Ascending aorta (tissue), 2 donors: ENCODE measurements at regions of chr18 and their contacts with region 1.

Region 1: DNA sequence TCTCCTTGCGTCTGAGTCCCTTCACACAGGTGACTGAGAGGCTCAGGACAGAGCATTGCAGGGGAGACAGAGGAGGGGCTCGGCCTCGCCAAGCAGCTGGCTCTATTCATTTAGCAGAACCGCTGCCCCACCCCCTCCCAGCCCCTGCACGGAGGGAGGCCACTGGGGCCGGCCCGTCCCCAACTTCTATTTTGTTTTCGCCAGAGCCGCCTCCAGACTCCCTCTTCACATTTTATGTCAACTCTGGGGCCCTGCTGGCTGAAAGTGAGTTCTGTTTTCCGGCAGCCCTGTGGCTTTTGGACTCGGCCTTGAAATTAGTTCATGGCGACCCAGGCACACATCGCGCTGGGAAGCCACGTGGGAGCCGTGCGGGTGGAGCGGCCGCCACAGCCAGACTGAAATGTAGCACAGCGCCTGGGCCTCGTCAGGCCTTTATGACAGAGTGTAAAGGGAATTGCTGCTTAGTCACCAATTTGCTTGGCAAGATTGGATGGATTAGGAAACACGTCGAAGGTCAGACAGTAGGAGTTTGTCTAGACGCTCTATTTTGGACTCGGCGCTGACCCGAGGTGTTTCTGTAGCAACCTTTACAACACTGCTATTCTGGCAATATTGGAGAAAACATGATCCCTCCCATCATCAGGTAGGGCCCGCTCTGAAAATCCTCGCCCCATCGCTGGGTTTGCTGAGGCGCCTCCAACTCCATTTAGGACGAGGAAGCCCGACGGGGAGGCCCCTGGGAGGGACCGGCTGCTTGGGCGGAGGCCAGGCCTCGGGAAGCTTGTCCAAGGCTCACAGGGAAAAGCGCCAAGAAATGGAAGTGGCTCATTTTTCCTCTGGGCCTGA is 90.7 kb upstream of the CTDP1 start:
- DNase-seq: peak; percentile 82 to 97
- H3K4me3 ChIP-seq: peak overlapping the region in 1 of 2 donors; percentile 43
- H3K27ac ChIP-seq: peak overlapping the region; percentile 94 to 95
- H3K4me1 ChIP-seq: peaks cover 11 to 28% of the 10 kb centered on the region in 2 donors
- H3K27me3 ChIP-seq: no peaks in the 10 kb centered on the region
- CTCF ChIP-seq: peak in 1 of 3 experiments; percentile 20

Region 2: DNA sequence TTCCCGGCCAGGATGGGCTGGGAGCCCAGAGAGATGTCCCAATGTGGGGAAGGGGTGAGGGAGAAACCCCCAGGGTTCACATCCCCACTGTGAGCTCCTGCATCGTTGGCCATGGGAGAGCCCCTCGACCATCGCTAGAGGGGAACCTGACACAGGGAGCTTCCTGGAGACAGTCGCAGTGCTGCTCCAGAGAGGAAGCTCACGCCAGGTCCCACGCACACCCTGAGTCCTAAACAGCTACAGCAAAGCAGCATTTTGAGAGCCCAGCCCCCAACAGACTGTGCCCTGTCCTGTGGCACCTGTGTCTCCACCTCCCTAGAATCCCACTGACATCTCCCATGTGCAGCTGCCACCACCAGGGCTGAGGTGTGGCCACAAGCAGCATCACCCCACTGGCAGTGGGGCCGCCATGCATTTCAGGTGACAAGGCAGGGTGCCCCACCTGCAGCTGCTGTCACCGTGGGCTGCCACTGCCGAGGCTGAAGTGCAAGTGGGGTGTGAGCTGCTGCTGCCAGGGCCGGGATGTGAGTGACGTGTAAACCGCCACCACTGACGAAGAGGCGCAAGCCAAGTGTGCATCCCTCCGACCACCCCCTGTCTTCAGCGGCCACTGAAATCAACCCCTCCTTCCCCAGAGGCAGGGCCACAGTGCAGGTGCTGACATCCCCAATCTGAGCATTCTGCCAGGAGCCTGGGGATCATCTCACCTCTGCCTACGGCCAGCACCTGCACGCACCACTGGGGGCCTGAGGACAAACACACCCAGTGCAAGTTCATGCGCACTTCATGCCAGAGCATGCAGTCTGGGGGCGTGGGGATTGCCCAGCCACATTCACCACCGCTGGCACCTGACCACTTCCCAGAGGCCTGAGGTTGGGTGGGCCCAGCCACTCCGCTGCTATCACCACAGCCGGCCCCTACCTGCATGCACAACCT is 1076.9 kb before region 1 on chr18:
- intact Hi-C with region 1: no loop called
- DNase-seq: peak in 1 of 2 donors; percentile 54
- H3K4me3 ChIP-seq: no peak overlapping the region
- H3K27ac ChIP-seq: no peak overlapping the region
- H3K4me1 ChIP-seq: no peaks in the 10 kb centered on the region
- H3K27me3 ChIP-seq: no peaks in the 10 kb centered on the region
- CTCF ChIP-seq: no peak

Region 3: GRCh38 chr18:79068937-79069791 is 519.7 kb before region 1 on chr18 and contains the start of gene ATP9B:
- intact Hi-C with region 1: loop called (anchors 5 kb)
- DNase-seq: peak; percentile 87 to 98
- H3K4me3 ChIP-seq: peak within 1 kb of the TSS; percentile 89 to 91
- H3K27ac ChIP-seq: peak within 1 kb of the TSS; percentile 93 to 99
- H3K4me1 ChIP-seq: peaks cover 3 to 17% of the 10 kb centered on the region in 2 donors
- H3K27me3 ChIP-seq: no peaks in the 10 kb centered on the region
- CTCF ChIP-seq: no peak
- total RNA-seq, gene ATP9B: 14.4 TPM

Region 4: DNA sequence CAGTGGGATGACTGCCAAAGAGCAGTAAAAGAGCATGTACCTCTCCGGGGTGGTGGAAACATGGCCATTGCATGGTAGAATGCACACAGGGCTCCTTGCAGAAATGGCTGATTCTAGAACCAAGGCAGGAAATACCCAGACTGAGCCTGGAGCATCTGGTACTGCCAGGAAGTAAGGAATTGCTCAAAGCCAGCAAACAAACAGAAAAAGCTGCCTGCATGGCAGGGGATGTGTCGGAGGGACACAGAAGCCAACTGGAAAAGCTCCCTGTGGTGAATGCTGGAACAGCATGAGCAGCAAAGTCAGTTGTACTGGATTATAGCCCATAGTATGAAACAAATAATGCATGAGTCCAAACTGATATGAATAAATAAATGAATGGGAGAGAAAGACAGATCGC is 271.1 kb before region 1 on chr18:
- intact Hi-C with region 1: no loop called
- DNase-seq: no peak
- H3K4me3 ChIP-seq: no peak overlapping the region
- H3K27ac ChIP-seq: no peak overlapping the region
- H3K4me1 ChIP-seq: no peaks in the 10 kb centered on the region
- H3K27me3 ChIP-seq: no peaks in the 10 kb centered on the region
- CTCF ChIP-seq: no peak

Region 5: DNA sequence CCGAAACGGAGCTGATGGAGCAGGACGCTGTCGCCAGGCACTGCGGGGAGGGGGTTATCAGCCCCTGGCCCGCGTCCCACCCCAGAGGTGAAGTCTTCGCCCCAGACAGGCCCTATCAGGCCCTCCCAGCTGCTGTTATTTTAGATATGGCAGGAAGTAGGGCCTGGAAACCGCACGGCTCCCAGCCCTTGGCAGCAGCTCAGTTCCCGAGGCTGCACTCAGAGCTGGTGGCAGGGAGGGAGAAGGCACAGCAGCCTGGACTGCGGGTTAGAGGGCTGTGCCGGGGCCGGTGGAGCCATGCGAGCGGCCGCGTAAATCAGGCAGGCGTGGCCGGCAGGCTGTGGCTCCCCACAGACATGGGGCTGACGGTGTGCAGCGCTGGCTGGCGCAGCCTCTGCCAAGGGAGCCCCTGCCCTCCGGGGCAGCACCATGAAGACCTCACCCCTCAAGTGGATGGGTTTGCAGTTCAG is 81.7 kb before region 1 on chr18:
- intact Hi-C with region 1: loop called (anchors 2 kb)
- DNase-seq: peak in 1 of 2 donors; percentile 82
- H3K4me3 ChIP-seq: peak overlapping the region; percentile 57 to 59
- H3K27ac ChIP-seq: peak overlapping the region; percentile 90 to 93
- H3K4me1 ChIP-seq: peaks cover 7 to 31% of the 10 kb centered on the region in 2 donors
- H3K27me3 ChIP-seq: no peaks in the 10 kb centered on the region
- CTCF ChIP-seq: no peak

Region 6: DNA sequence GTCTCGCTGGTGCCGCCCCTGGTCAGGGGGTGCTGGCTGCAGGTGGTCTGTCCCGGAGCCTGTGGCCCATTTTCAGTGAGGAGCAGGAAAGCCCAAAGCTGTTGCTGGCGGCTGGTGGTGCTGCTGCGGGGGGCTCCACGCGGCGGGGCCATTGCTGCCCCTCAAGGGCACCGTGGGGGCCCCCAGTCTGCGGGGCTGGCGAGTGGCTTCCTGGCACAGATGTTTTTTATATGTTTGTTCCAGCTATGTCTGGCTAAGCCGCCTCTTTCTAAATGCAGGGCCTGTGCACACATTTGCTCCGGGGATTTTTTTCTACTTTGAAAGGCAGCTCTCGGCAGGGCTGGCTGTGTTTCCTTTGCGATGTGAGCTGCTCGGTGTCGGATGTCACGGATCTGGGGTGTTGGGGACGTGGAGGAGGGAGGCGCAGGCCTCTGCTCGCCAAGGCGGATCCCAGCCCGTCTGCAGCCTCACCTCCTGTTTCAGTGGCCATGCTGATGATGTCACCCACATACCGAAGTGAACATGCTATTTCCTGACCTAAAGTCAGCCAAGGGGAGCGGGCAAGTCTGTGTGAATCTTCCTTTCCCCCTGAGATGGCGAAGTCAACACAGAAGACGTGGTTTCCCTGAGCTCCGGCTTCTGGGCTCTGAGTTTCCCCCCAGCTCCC is 21.2 kb before region 1 on chr18:
- intact Hi-C with region 1: loop called (anchors 1 kb)
- DNase-seq: peak in 1 of 2 donors; percentile 78
- H3K4me3 ChIP-seq: peak overlapping the region in 1 of 2 donors; percentile 22
- H3K27ac ChIP-seq: peak overlapping the region; percentile 44 to 61
- H3K4me1 ChIP-seq: peaks cover 0 to 18% of the 10 kb centered on the region in 2 donors
- H3K27me3 ChIP-seq: no peaks in the 10 kb centered on the region
- CTCF ChIP-seq: no peak

Region 7: GRCh38 chr18:79644006-79644665 is 55.3 kb after region 1 on chr18:
- intact Hi-C with region 1: loop called (anchors 2 kb)
- DNase-seq: no peak
- H3K4me3 ChIP-seq: no peak overlapping the region
- H3K27ac ChIP-seq: no peak overlapping the region
- H3K4me1 ChIP-seq: peaks cover 0 to 2% of the 10 kb centered on the region in 2 donors
- H3K27me3 ChIP-seq: no peaks in the 10 kb centered on the region
- CTCF ChIP-seq: peak; percentile 90 to 100 (median 98)